Ascending aorta (tissue), 2 donors: ENCODE measurements at regions of chr19 and their contacts with region 1.

Region 1: GRCh38 chr19:18117692-18118378 is 20.3 kb downstream of the MAST3 start:
- DNase-seq: peak; percentile 34 to 90
- H3K4me3 ChIP-seq: peak overlapping the region; percentile 71 to 73
- H3K27ac ChIP-seq: peak overlapping the region; percentile 66 to 74
- H3K4me1 ChIP-seq: peaks cover 0 to 16% of the 10 kb centered on the region in 2 donors
- H3K27me3 ChIP-seq: no peaks in the 10 kb centered on the region
- CTCF ChIP-seq: peak in 1 of 3 experiments; percentile 8

Region 2: DNA sequence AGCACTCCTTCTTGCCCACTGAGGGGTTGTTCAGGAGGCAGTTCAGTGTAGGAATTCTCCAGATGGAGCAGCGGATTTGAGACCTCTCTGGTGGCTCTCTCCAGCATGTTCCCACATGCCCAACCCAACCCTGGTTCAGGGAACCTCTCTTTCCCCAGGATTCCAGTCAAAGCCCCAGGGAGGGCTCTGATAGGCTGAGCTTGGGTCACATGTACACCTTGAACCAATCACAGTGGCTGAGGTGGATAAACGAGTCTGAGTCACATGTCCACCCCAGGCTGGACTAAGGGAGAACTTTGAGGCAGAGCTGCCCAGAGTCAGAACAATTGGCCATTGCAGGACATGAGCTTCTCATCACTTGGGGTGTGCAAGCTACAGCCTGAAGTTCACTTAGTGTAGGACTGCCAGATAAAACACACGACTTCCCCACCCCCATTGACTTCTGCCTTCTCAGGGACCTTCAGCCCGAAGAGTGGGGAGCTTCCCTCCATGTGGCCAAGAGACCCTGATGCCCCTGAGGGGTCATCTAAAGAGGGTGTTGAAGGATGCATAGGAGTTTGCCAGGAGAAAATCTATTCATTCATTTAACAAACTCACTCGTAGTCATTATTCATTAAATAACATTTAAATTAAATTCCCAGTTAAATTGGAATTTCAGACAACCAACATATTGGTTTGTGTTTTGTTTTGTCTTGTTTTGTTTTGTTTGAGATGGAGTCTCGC is 24.2 kb before region 1 on chr19:
- intact Hi-C with region 1: loop called (anchors 1 kb)
- DNase-seq: no peak
- H3K4me3 ChIP-seq: no peak overlapping the region
- H3K27ac ChIP-seq: peak overlapping the region; percentile 38 to 69
- H3K4me1 ChIP-seq: peaks cover 9 to 35% of the 10 kb centered on the region in 2 donors
- H3K27me3 ChIP-seq: no peaks in the 10 kb centered on the region
- CTCF ChIP-seq: no peak

Region 3: DNA sequence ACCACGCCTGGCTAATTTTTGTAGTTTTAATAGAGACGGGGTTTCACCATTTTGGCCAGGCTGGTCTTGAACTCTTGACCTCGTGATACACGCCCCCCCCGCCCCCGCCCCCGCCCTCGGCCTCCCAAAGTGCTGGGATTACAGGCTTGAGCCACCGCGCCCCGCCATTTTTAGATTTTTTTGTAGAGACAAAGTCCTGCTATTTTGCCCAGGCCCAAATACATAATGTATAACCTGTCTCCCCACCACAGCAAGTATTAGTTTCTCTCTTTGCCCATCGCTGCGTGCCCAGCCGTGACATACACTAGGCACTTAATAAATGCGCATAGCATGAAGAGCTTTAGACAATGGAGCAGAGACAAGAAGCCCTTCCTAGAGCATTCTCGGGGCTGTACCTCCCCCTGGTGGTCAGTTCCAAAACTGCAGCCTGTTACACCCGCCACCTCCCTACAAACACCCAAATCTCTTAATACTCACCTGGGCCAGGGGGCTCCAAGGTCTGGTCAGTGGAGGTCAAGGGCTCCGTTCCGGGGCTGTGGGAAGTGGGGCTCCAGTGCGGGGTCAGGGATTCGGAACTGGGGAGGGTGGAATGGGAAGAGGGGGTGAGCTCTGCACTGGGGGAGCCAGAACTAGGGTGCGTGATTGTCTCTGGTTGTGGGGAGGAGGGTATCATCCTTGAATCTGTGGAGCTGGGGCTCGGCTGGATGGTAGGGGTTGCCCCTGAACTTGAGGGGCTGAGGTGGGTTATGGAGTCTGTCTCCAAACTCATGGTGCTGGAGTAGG is 133.9 kb after region 1 on chr19:
- intact Hi-C with region 1: loop called (anchors 10 kb)
- DNase-seq: peak in 1 of 2 donors; percentile 82
- H3K4me3 ChIP-seq: no peak overlapping the region
- H3K27ac ChIP-seq: no peak overlapping the region
- H3K4me1 ChIP-seq: no peaks in the 10 kb centered on the region
- H3K27me3 ChIP-seq: no peaks in the 10 kb centered on the region
- CTCF ChIP-seq: peak; percentile 96 to 98 (median 96)